Transverse colon (tissue), 4 donors: ENCODE measurements at regions of chr18 and their contacts with region 1.

Region 1: GRCh38 chr18:67318651-67319050 is 197.9 kb downstream of the DSEL start:
- DNase-seq: no peak
- H3K4me3 ChIP-seq: no peak overlapping the region
- H3K27ac ChIP-seq: no peak overlapping the region
- H3K4me1 ChIP-seq: no peaks in the 10 kb centered on the region
- H3K27me3 ChIP-seq: no peaks in the 10 kb centered on the region
- CTCF ChIP-seq: no peak
- EP300 ChIP-seq: no peak
- POLR2A ChIP-seq: no peak

Region 2: GRCh38 chr18:67634631-67635338 is 316.1 kb after region 1 on chr18:
- in situ Hi-C with region 1: no loop called
- intact Hi-C with region 1: no loop called
- DNase-seq: no peak
- H3K4me3 ChIP-seq: no peak overlapping the region
- H3K27ac ChIP-seq: no peak overlapping the region
- H3K4me1 ChIP-seq: no peaks in the 10 kb centered on the region
- H3K27me3 ChIP-seq: no peaks in the 10 kb centered on the region
- CTCF ChIP-seq: no peak
- EP300 ChIP-seq: no peak
- POLR2A ChIP-seq: no peak

Region 3: GRCh38 chr18:67840379-67840778 is 521.7 kb after region 1 on chr18:
- in situ Hi-C with region 1: no loop called
- intact Hi-C with region 1: loop called (anchors 5 kb)
- DNase-seq: no peak
- H3K4me3 ChIP-seq: no peak overlapping the region
- H3K27ac ChIP-seq: no peak overlapping the region
- H3K4me1 ChIP-seq: no peaks in the 10 kb centered on the region
- H3K27me3 ChIP-seq: no peaks in the 10 kb centered on the region
- CTCF ChIP-seq: no peak
- EP300 ChIP-seq: no peak
- POLR2A ChIP-seq: no peak

Region 4: GRCh38 chr18:67913040-67913439 is 594.4 kb after region 1 on chr18:
- in situ Hi-C with region 1: no loop called
- intact Hi-C with region 1: no loop called
- DNase-seq: no peak
- H3K4me3 ChIP-seq: no peak overlapping the region
- H3K27ac ChIP-seq: no peak overlapping the region
- H3K4me1 ChIP-seq: no peaks in the 10 kb centered on the region
- H3K27me3 ChIP-seq: no peaks in the 10 kb centered on the region
- CTCF ChIP-seq: no peak
- EP300 ChIP-seq: no peak
- POLR2A ChIP-seq: no peak